ENCODE measurements at regions of chr6 and their contacts with region 1.

Region 1: DNA sequence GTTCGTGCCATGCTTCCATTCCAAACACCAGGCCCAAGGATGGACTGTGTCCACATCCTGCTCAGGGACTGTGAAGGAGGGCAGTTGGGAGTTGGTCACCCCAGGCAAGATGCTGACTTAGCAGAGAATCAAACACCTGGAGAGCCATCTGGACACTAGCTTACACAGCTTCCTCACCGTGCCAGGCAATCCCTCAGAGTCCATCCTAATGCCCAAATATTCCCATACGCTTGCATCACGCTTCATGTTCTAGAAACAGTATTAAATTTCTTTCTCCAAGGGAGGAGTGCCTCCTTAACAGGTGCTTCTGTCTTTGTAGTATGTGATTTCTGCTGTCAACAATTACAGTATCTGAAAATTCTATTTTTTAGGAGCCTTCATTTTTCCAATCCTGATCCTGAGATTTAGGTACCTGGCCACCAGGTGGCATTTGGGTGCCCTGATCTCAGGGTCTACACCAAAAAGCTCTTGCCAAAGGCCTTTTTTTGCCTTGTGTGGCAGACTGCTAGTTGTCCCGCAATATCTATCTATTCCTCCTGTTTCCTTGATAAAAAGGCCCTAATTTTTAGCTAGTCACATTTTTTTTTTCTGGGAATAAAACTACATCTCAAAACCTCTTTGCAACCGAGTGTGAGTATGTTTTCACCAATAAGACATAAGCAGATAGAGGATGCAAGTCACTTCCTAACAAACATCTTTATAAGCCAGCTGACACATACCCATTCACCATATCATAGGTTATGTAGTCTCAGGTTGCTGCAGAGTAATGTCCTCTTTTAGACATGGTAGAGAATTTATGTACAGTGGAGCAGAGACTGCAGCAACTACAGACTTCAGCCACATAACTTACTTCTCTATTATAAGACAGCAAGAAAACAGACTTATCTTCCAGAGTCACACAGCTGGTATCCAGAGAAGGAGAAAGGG is 85.0 kb downstream of the PREP start:
- DNase-seq: no peak
- ATAC-seq: peak; percentile 45 to 71 (median 60)
- H3K4me3 ChIP-seq: no peak overlapping the region
- H3K27ac ChIP-seq: peak overlapping the region; percentile 64
- H3K4me1 ChIP-seq: peaks cover 45% of the 10 kb centered on the region
- H3K27me3 ChIP-seq: no peaks in the 10 kb centered on the region
- CTCF ChIP-seq: peak; percentile 47

Region 2: GRCh38 chr6:105363100-105363754 is 45.4 kb after region 1 on chr6:
- intact Hi-C with region 1: loop called (anchors 5 kb)
- DNase-seq: no peak
- ATAC-seq: peak in 3 of 4 donors; percentile 53 to 76 (median 64)
- H3K4me3 ChIP-seq: no peak overlapping the region
- H3K27ac ChIP-seq: peak overlapping the region; percentile 72
- H3K4me1 ChIP-seq: peaks cover 29% of the 10 kb centered on the region
- H3K27me3 ChIP-seq: no peaks in the 10 kb centered on the region
- CTCF ChIP-seq: peak; percentile 36

Region 3: GRCh38 chr6:105402939-105403935 is 85.4 kb after region 1 on chr6 and contains the start of gene PREP:
- intact Hi-C with region 1: loop called in 1 of 2 experiments (anchors 2 kb)
- DNase-seq: peak; percentile 88 to 93
- ATAC-seq: peak; percentile 93 to 96 (median 94)
- H3K4me3 ChIP-seq: peak within 1 kb of the TSS; percentile 97
- H3K27ac ChIP-seq: peak within 1 kb of the TSS; percentile 95
- H3K4me1 ChIP-seq: peaks cover 41% of the 10 kb centered on the region
- H3K27me3 ChIP-seq: no peaks in the 10 kb centered on the region
- CTCF ChIP-seq: peak; percentile 78
- total RNA-seq, gene PREP: 44.7 to 67.0 (median 55.0) TPM

Measured in psoas muscle (tissue), 8 donors.